GM10248 (cell line): ENCODE measurements at regions of chr1 and their contacts with region 1.

Region 1: DNA sequence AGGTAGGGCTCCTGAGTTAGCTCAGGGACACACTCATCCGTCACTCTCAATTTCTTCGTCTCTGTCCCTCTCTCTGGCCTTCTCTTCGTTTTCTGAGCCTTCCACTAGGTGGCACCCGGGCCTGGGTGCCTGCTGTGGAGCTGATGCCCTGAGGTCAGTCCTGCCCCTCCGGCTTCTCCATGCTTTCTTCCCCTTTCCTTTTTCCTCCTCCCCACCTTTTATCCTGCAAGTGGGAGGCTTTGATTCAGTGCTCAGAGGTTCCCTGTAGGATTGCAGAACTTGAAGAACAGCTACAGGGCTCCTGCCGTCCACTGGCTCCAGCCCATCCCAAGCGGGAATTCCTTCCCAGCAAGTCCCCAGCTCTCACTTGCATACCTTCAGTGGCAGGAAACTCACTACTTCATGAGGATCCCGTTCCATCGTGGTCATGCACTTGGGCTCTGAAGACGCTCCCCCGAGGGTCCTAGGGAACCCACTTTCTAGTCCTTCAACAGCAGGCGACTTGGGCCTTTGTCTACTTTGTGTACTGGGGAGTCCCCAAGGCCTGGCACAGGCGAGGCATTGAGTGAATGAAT is 45.6 kb downstream of the SRRM1 start:
- DNase-seq: peak; percentile 85
- CTCF ChIP-seq: peak; percentile 81

Region 2: GRCh38 chr1:24654011-24654410 is 34.7 kb before region 1 on chr1:
- CTCF ChIA-PET with region 1: interaction called, 13 read pairs
- POLR2A ChIA-PET with region 1: no interaction called
- DNase-seq: no peak
- CTCF ChIP-seq: no peak

Region 3: DNA sequence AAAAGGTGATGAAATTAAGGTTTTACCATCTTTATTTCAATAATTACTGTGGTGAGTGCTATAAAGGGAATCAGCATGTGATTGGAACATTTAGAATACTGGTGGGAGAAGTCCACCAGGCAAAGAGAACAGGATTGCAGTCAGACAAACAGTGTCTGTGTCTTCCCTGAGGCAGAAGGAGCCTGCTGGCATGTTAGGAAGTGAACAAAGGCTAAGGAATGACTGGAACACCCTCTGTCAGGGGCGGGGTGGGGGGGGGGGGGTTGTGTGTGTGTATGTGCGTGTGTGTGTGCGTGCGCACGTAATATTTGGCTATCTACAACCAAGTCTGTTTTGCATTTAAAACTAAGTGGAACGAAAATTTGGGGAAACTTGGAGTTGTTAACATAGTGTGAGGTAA is 15.4 kb before region 1 on chr1:
- CTCF ChIA-PET with region 1: interaction called, 29 read pairs
- POLR2A ChIA-PET with region 1: no interaction called
- DNase-seq: no peak
- CTCF ChIP-seq: no peak

Region 4: GRCh38 chr1:24714859-24715520 is 26.3 kb after region 1 on chr1:
- CTCF ChIA-PET with region 1: interaction called, 13 read pairs
- POLR2A ChIA-PET with region 1: no interaction called
- DNase-seq: no peak
- CTCF ChIP-seq: no peak

Region 5: DNA sequence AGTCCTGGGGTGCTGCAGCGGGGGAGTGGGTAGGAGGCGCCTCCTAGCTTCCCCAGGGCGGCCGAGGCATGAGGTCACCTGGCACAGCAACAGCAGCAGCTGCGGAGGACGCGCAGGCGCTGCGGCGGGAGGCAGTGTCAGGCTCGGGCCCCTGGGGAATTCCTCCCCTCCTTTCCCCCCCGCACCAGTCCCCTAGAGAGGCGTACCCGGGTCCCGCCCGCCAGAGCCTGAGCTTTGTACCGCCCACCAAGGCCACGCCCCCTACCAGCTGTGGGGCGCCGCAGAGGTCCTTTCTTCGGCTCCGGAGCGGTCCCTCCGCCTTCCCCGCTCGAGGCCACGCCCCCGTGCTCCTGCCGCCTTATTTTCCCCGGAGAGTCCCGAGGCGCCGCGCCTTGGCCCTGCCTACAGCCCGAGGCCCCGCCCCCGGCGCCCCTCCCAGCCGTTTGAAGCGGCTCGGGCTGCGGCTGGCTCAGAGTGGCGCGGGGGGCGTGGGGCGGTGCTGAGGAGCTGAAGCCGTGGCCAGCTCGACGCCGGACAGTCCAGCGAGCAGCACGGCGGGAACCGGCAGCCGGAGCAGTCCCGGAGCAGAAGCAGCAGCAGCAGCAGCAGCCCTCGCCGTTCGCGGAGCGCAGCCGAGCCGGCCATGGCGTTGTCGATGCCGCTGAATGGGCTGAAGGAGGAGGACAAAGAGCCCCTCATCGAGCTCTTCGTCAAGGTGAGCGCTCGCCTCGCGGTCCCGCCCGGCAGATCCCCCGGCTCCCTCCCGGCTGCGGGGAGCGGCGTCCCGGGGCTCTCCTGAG is 56.4 kb after region 1 on chr1 and contains the start of gene CLIC4:
- CTCF ChIA-PET with region 1: interaction called, 21 read pairs
- POLR2A ChIA-PET with region 1: interaction called, 3 read pairs
- DNase-seq: peak; percentile 95
- CTCF ChIP-seq: peak; percentile 53

Region 6: GRCh38 chr1:24830680-24831272 is 142.1 kb after region 1 on chr1:
- CTCF ChIA-PET with region 1: interaction called, 250 read pairs
- POLR2A ChIA-PET with region 1: no interaction called
- DNase-seq: peak; percentile 46
- CTCF ChIP-seq: peak; percentile 59

Region 7: DNA sequence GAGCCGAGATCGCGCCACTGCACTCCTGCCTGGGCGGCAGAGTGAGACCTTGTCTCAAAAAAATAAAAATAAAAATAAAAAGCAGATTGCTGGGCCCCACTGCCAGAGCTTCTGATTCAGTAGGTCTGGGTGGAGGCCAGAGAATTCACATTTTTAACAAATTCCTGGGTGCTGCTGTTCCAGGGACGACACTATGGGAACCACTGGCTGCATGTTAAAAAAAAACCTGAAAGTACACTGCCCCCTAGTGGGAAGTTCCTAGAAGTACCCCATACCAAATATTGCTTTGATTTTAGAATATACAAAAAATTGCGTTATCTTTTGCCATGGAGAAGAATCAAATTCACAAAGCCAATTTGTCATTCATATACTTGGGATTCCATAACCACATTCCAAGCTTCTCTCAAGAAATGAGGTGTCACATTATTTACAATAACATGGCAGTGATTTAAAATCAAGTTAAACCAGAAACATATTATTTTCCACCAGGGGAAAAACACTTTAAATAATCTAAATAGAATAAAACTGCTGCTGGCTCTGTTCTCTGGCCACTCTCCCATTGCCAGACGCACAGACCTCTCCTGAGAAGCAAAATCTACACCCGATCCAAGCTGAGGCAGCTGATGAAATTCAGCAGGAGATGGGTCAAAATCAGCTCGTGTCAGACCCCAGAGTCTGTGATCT is 516.2 kb after region 1 on chr1:
- CTCF ChIA-PET with region 1: interaction called, 10 read pairs
- POLR2A ChIA-PET with region 1: no interaction called
- DNase-seq: peak; percentile 65
- CTCF ChIP-seq: peak; percentile 42